ENCODE measurements at regions of chr5 and their contacts with region 1.

Region 1: GRCh38 chr5:176537608-176538504 is 654 bp upstream of the RNF44 start:
- DNase-seq: peak; percentile 94 to 100 (median 96)
- ATAC-seq: peak; percentile 70
- H3K4me3 ChIP-seq: peak overlapping the region; percentile 84 to 97
- H3K4me3 Mint-ChIP-seq: peak overlapping the region; percentile 98
- H3K27ac ChIP-seq: peak overlapping the region; percentile 95 to 99
- H3K27ac Mint-ChIP-seq: peak overlapping the region; percentile 100
- H3K4me1 ChIP-seq: peaks cover 70% of the 10 kb centered on the region
- H3K4me1 Mint-ChIP-seq: peaks cover 70% of the 10 kb centered on the region
- H3K27me3 ChIP-seq: no peaks in the 10 kb centered on the region
- H3K27me3 Mint-ChIP-seq: no peaks in the 10 kb centered on the region
- CTCF ChIP-seq: no peak

Region 2: DNA sequence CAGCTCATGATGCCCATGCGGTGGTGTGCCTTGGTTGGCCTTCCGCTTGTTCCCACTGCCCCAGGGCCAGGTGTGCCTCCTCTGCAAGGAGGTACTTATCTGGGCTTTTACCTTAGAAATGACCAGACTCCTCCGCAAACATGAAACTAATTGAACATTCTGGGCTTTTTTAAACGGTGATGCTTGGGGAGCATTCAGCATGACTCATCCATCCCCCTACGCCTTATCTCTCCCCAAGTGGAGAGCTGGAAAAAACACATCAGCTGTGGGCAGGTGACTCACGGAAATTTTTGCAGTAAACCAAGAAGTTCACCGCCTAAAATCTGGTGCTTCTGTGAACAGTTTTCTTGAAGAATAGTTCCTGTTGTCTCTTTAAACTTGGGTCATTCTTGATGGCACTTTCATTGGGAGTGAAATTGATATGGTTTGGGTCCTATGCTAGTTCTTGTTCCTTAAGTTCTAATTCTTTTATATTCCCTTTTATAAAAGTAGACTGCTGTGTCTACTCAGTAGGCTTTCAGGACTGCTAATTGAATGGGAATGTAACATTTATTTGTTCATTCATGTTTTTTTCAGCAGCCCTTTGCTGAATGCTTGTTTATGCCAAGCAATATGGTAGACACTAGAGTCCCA is 1019.9 kb before region 1 on chr5:
- CTCF ChIA-PET with region 1: no interaction called
- POLR2A ChIA-PET with region 1: no interaction called
- intact Hi-C with region 1: loop called in 1 of 2 experiments (anchors 5 kb)
- DNase-seq: peak in 8 of 9 experiments; percentile 32 to 70 (median 51)
- ATAC-seq: peak; percentile 13
- H3K4me3 ChIP-seq: no peak overlapping the region
- H3K4me3 Mint-ChIP-seq: peak overlapping the region; percentile 35
- H3K27ac ChIP-seq: peak overlapping the region in 1 of 2 experiments; percentile 5
- H3K27ac Mint-ChIP-seq: peak overlapping the region; percentile 87
- H3K4me1 ChIP-seq: peaks cover 66% of the 10 kb centered on the region
- H3K4me1 Mint-ChIP-seq: peaks cover 75% of the 10 kb centered on the region
- H3K27me3 ChIP-seq: no peaks in the 10 kb centered on the region
- H3K27me3 Mint-ChIP-seq: no peaks in the 10 kb centered on the region
- CTCF ChIP-seq: no peak

Region 3: DNA sequence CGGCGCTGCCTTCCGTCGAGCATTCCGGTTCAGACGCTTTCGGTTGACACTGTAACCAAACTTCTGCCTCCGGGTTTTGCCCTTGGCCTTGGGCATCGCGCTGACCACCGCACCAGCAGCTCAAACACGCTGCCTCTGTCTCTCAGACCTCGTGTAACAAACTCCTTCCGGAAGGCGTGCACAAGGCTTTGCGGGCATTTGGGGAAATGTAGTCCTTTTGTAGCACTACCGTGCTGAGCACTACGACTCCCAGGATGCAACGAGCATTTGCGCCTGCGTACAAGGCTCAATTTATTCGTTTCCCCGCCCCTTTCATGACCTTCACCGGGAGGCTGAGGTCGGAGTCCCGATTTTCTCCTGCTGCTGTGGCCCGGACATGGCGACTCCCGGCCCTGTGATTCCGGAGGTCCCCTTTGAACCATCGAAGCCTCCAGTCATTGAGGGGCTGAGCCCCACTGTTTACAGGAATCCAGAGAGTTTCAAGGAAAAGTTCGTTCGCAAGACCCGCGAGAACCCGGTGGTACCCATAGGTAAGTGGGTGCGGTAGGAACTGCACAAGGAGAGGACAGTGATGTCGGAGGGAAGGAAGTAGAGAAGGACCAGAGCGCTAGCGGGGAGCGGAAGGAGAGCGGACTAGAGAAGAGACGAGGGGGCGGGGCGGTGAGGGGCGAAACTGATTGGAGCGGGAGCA is 149.3 kb before region 1 on chr5 and contains the starts of genes HIGD2A and NOP16:
- CTCF ChIA-PET with region 1: no interaction called
- POLR2A ChIA-PET with region 1: interaction called, 19 read pairs
- intact Hi-C with region 1: loop called in 1 of 2 experiments (anchors 1 kb)
- DNase-seq: peak; percentile 97 to 100 (median 99)
- ATAC-seq: peak; percentile 90
- H3K4me3 ChIP-seq: peak within 1 kb of the TSS; percentile 87 to 89
- H3K4me3 Mint-ChIP-seq: peak within 1 kb of the TSS; percentile 99
- H3K27ac ChIP-seq: peak within 1 kb of the TSS; percentile 90 to 93
- H3K27ac Mint-ChIP-seq: peak within 1 kb of the TSS; percentile 99
- H3K4me1 ChIP-seq: peaks cover 22% of the 10 kb centered on the region
- H3K4me1 Mint-ChIP-seq: peaks cover 36% of the 10 kb centered on the region
- H3K27me3 ChIP-seq: no peaks in the 10 kb centered on the region
- H3K27me3 Mint-ChIP-seq: no peaks in the 10 kb centered on the region
- CTCF ChIP-seq: no peak
- total RNA-seq, gene HIGD2A: 102 to 106 TPM
- total RNA-seq, gene NOP16: 21.6 to 24.2 TPM

Region 4: GRCh38 chr5:176524135-176524534 is 13.7 kb before region 1 on chr5:
- CTCF ChIA-PET with region 1: interaction called, 37 read pairs
- POLR2A ChIA-PET with region 1: interaction called, 54 read pairs
- intact Hi-C with region 1: no loop called
- DNase-seq: no peak
- ATAC-seq: no peak
- H3K4me3 ChIP-seq: no peak overlapping the region
- H3K4me3 Mint-ChIP-seq: no peak overlapping the region
- H3K27ac ChIP-seq: no peak overlapping the region
- H3K27ac Mint-ChIP-seq: no peak overlapping the region
- H3K4me1 ChIP-seq: peaks cover 21% of the 10 kb centered on the region
- H3K4me1 Mint-ChIP-seq: peaks cover 29% of the 10 kb centered on the region
- H3K27me3 ChIP-seq: no peaks in the 10 kb centered on the region
- H3K27me3 Mint-ChIP-seq: no peaks in the 10 kb centered on the region
- CTCF ChIP-seq: no peak

Region 5: DNA sequence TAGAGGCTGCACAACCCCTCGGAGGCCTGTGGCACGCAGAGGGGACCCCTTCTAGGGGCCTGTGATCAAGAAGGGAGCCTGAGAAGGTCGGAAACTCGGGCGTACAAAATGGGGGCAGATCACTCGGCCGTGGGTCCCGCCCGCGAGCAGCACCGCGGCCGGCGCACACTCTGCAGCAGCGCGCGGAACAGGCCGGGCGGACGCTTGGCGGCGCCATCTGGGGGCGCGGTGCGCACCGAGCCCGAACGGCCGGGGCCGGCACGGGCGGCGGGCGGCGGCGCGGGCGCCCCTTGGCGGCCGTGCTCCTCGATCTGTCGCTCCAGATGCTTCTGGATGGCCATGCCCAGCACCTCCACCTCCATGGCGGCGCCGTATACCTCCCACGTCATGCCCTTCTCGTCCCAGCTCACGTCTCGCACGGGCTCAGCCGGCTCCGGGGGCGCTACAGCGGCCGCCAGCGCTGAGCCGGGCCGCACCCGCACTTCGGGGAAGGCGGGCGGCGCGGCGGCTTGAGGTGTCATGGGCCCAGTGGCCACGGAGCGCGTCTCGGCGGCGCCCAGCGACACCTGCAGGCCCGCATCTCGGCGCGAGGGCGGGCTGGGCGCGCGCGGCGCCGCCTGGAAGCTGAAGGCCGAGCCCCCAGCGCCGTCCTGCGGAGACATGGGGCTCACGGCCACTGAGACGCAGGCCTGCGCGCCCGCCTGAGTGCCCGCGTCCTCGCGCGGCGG is 59.0 kb after region 1 on chr5:
- CTCF ChIA-PET with region 1: interaction called, 3 read pairs
- POLR2A ChIA-PET with region 1: interaction called, 8 read pairs
- intact Hi-C with region 1: loop called in 1 of 2 experiments (anchors 2 kb)
- DNase-seq: peak; percentile 44 to 84 (median 66)
- ATAC-seq: peak; percentile 81
- H3K4me3 ChIP-seq: peak overlapping the region; percentile 36 to 52
- H3K4me3 Mint-ChIP-seq: peak overlapping the region; percentile 77
- H3K27ac ChIP-seq: no peak overlapping the region
- H3K27ac Mint-ChIP-seq: no peak overlapping the region
- H3K4me1 ChIP-seq: peaks cover 9% of the 10 kb centered on the region
- H3K4me1 Mint-ChIP-seq: peaks cover 7% of the 10 kb centered on the region
- H3K27me3 ChIP-seq: no peaks in the 10 kb centered on the region
- H3K27me3 Mint-ChIP-seq: no peaks in the 10 kb centered on the region
- CTCF ChIP-seq: no peak

Region 6: GRCh38 chr5:177006265-177006972 is 468.6 kb after region 1 on chr5 and contains the start of gene UIMC1:
- CTCF ChIA-PET with region 1: no interaction called
- POLR2A ChIA-PET with region 1: no interaction called
- intact Hi-C with region 1: loop called in 1 of 2 experiments (anchors 2 kb)
- DNase-seq: peak; percentile 83 to 95 (median 91)
- ATAC-seq: peak; percentile 87
- H3K4me3 ChIP-seq: peak within 1 kb of the TSS; percentile 91 to 99
- H3K4me3 Mint-ChIP-seq: peak within 1 kb of the TSS; percentile 94
- H3K27ac ChIP-seq: peak within 1 kb of the TSS; percentile 70 to 88
- H3K27ac Mint-ChIP-seq: peak within 1 kb of the TSS; percentile 94
- H3K4me1 ChIP-seq: peaks cover 27% of the 10 kb centered on the region
- H3K4me1 Mint-ChIP-seq: peaks cover 27% of the 10 kb centered on the region
- H3K27me3 ChIP-seq: no peaks in the 10 kb centered on the region
- H3K27me3 Mint-ChIP-seq: no peaks in the 10 kb centered on the region
- CTCF ChIP-seq: no peak
- total RNA-seq, gene UIMC1: 48.4 to 52.8 TPM

Region 7: DNA sequence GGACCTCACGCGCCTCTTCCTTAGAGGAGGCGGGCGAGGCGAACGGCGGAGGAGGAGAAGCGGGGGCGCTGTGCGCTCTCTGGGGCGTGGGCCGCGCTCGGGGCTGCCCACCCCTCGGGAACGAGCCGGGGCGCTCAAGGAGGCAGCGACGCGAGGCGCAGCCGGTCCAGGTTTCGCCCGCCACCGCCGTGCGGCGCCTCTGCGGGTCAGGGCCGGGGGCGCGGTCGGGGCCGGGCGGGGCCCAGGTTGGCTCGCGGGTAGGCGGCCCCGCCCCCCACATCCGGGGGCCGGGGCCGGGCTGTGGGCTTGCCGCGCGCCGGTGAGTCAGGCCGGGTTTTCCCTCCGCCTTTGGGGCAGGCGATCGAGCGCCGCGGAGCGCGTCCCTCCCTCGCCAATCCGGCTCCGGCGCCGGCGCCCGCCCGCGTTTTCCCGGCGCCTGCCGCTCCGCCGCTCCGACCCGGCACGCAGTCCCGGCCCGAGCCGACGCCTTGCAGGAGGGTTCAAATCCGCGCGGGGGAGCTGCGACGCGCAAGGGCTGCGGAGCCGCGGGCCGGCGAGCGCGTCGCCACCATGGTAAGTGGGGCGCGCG is 1575.4 kb after region 1 on chr5 and contains the start of gene N4BP3:
- CTCF ChIA-PET with region 1: no interaction called
- POLR2A ChIA-PET with region 1: no interaction called
- intact Hi-C with region 1: loop called in 1 of 2 experiments (anchors 10 kb)
- DNase-seq: peak; percentile 60 to 91 (median 81)
- ATAC-seq: peak; percentile 44
- H3K4me3 ChIP-seq: peak within 1 kb of the TSS; percentile 54 to 88
- H3K4me3 Mint-ChIP-seq: peak within 1 kb of the TSS; percentile 90
- H3K27ac ChIP-seq: peak within 1 kb of the TSS; percentile 45 to 51
- H3K27ac Mint-ChIP-seq: peak within 1 kb of the TSS; percentile 93
- H3K4me1 ChIP-seq: peaks cover 45% of the 10 kb centered on the region
- H3K4me1 Mint-ChIP-seq: peaks cover 42% of the 10 kb centered on the region
- H3K27me3 ChIP-seq: no peaks in the 10 kb centered on the region
- H3K27me3 Mint-ChIP-seq: no peaks in the 10 kb centered on the region
- CTCF ChIP-seq: no peak
- total RNA-seq, gene N4BP3: 17.3 to 17.9 TPM

Measured in CD8-positive, alpha-beta T cell (primary cell).